ENCODE measurements at regions of chr1 and their contacts with region 1.

Region 1: GRCh38 chr1:45011837-45012638 is at the start of gene UROD:
- DNase-seq: peak; percentile 96
- ATAC-seq: peak; percentile 95
- total RNA-seq, gene UROD: 73.4 TPM

Region 2: DNA sequence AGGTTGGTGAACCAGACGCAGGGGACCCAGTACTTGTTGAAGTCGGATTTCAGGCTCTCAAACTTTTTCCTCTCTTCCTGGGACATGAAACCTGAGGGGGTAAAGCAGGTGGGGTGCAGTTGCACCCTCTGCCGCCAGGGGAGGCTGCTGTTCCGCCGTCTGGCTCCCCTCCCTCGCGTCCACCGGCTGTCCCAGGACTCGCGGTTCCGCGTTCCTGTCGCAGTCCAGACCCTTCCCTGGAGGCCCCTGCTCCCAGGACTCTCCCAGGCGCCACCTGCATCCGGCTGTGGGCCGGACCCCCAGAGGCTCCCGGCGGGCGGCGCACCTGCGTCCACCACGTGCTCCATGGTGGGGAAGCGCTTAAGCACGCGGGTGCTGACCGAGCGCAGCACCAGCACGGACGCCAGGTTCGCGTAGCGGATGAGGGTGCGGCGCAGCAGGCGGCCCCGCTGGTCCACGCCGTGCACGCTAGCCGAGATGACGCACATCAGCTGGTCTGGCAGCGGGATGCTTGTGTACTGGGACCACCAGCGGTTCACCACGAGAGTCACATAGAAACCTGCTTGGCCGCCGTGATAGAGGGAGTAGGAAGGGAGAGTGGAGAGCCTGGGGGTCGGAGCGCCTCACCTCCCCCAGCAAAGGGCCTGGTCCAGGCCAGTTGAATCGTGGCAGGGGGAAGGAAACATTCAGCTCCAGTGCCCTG is 225.7 kb before region 1 on chr1:
- intact Hi-C with region 1: loop called (anchors 5 kb)
- DNase-seq: peak; percentile 79
- ATAC-seq: peak; percentile 80

Region 3: DNA sequence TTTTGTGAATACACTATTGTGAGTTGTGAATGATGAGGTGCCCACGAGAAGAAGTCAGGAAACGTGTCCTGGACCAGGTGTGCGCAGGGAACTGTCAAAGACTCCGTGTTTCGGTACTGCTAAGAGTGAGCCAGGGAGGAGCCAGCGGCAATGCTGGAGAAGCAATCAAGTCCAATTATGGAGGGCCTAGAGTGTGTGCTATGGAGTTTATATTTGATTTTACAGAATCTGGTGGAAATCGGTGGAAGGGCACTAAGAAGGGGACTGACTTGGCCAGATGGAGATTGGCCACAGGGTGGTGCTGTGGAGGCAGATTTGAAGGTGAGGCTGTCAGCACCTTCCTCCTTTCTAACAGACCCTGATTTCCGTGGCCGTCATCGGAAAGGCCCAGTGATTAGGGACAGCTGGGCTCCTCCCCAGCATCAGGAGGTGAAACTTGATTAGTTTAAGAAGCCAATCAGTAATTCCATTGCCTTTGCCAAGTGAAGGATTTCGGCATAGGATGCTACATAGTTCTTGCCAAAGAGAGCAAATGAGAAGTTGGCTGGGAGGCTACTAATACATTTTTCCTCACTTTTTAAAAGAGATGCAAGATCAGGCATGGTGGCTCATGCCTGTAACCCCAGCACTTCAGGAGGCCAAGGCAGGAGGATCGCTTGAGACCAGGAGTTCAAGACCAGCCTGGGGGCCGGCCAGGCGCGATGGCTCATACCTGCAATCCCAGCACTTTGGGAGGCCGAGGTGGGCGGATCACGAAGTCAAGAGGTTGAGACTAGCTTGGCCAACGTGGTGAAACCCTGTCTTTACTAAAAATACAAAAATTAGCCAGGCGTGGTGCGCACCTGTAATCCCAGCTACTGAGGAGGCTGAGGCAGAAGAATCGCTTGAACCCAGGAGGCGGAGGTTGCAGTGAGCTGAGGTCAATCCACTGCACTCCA is 176.0 kb before region 1 on chr1:
- intact Hi-C with region 1: loop called (anchors 5 kb)
- DNase-seq: peak; percentile 88
- ATAC-seq: peak; percentile 89

Region 4: GRCh38 chr1:45299981-45300668 is 288.1 kb after region 1 on chr1:
- intact Hi-C with region 1: loop called (anchors 2 kb)
- DNase-seq: no peak
- ATAC-seq: no peak

Region 5: DNA sequence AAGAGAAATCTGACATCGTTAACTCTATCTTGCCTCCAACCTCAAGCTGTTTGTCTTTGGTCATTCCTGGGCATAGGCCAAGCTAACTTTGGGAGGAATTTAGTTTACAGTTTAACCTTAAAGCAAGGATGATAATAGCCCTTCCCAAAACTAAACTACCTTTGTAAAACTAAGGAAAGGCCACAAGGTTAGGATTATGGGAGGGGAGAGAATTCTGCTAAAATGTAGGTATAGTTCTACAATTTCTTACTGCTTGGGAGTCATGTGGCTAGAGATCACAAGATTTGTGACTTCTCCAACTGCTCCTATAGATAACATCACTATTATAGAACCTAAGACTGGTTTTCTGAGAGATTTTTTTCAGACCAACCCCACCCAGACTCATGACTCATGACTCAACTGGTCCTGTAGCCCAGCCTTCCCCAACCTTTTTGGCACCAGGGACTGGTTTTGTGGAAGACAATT is 398.8 kb after region 1 on chr1:
- intact Hi-C with region 1: no loop called
- DNase-seq: no peak
- ATAC-seq: no peak

Measured in Right ventricle myocardium superior (tissue), 1 donor.